ENCODE measurements at regions of chr2 and their contacts with region 1.

Region 1: DNA sequence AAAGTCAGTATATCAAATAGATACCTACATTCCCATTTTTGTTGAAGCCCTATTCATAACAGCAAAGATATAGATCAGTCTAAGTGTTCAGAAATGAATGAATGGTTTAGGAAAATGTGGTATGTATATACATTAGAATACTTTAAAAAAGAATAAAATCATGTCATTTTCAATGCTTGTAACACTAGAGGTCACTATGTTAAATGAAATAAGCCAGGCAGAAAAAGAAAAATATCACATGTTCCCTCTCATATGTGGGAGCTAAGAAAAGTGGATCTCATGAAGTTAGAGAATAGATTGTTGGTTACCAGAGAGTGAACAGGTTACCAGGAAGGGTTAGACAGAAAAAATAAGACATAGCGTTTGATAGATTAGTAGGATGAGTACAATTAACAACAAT is 1111.0 kb upstream of the SLC39A10 start:
- DNase-seq: no peak
- H3K4me3 ChIP-seq: no peak overlapping the region
- H3K4me3 Mint-ChIP-seq: no peak overlapping the region
- H3K27ac Mint-ChIP-seq: no peak overlapping the region
- H3K4me1 ChIP-seq: peaks cover 8% of the 10 kb centered on the region; the same call in 1 of the 2 replicates
- H3K4me1 Mint-ChIP-seq: no peaks in the 10 kb centered on the region
- H3K27me3 ChIP-seq: no peaks in the 10 kb centered on the region
- H3K27me3 Mint-ChIP-seq: no peaks in the 10 kb centered on the region
- CTCF ChIP-seq: peak in 1 of 2 experiments; percentile 9

Region 2: GRCh38 chr2:194674043-194674442 is 128.1 kb after region 1 on chr2:
- CTCF ChIA-PET with region 1: no interaction called
- POLR2A ChIA-PET with region 1: no interaction called
- intact Hi-C with region 1: loop called (anchors 1 kb)
- DNase-seq: no peak
- H3K4me3 ChIP-seq: no peak overlapping the region
- H3K4me3 Mint-ChIP-seq: no peak overlapping the region
- H3K27ac Mint-ChIP-seq: no peak overlapping the region
- H3K4me1 ChIP-seq: no peaks in the 10 kb centered on the region
- H3K4me1 Mint-ChIP-seq: no peaks in the 10 kb centered on the region
- H3K27me3 ChIP-seq: no peaks in the 10 kb centered on the region
- H3K27me3 Mint-ChIP-seq: no peaks in the 10 kb centered on the region
- CTCF ChIP-seq: no peak

Region 3: GRCh38 chr2:194867328-194867727 is 321.4 kb after region 1 on chr2:
- CTCF ChIA-PET with region 1: no interaction called
- POLR2A ChIA-PET with region 1: no interaction called
- intact Hi-C with region 1: loop called (anchors 1 kb)
- DNase-seq: no peak
- H3K4me3 ChIP-seq: no peak overlapping the region
- H3K4me3 Mint-ChIP-seq: no peak overlapping the region
- H3K27ac Mint-ChIP-seq: no peak overlapping the region
- H3K4me1 ChIP-seq: no peaks in the 10 kb centered on the region
- H3K4me1 Mint-ChIP-seq: no peaks in the 10 kb centered on the region
- H3K27me3 ChIP-seq: no peaks in the 10 kb centered on the region
- H3K27me3 Mint-ChIP-seq: no peaks in the 10 kb centered on the region
- CTCF ChIP-seq: peak; percentile 21 to 51

Region 4: DNA sequence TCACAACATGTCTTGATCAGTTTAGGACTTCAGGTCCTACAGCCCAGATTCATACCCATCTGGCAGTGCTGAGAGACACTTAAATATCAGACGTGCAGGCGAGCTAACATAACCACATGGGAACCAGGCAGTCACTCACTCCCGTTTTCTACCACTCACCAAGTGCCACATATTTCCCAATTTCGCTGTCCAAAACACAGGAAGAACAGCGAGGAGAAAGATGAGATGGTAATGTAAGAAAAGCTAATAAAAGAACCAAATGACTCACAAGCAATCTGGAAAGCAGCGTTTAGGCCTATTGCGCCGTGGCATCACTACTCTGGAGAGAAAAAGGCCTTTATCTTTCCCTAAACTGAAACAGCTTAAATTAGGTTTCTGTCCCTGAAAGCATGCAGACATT is 463.2 kb after region 1 on chr2:
- CTCF ChIA-PET with region 1: no interaction called
- POLR2A ChIA-PET with region 1: no interaction called
- intact Hi-C with region 1: no loop called
- DNase-seq: no peak
- H3K4me3 ChIP-seq: no peak overlapping the region
- H3K4me3 Mint-ChIP-seq: no peak overlapping the region
- H3K27ac Mint-ChIP-seq: no peak overlapping the region
- H3K4me1 ChIP-seq: no peaks in the 10 kb centered on the region
- H3K4me1 Mint-ChIP-seq: no peaks in the 10 kb centered on the region
- H3K27me3 ChIP-seq: no peaks in the 10 kb centered on the region
- H3K27me3 Mint-ChIP-seq: peaks cover 3% of the 10 kb centered on the region
- CTCF ChIP-seq: no peak

Measured in Caco-2 (cell line).